Heart right ventricle (tissue), 16 donors: ENCODE measurements at regions of chr1 and their contacts with region 1.

Region 1: GRCh38 chr1:181514298-181515290 is 31.3 kb downstream of the CACNA1E start:
- DNase-seq: no peak
- ATAC-seq: peak in 3 of 8 donors; percentile 44 to 77 (median 55)
- H3K4me3 ChIP-seq: no peak overlapping the region
- H3K27ac ChIP-seq: no peak overlapping the region
- H3K4me1 ChIP-seq: no peaks in the 10 kb centered on the region
- H3K27me3 ChIP-seq: peaks cover 0 to 49% (median 28%) of the 10 kb centered on the region in 7 donors
- CTCF ChIP-seq: no peak

Region 2: DNA sequence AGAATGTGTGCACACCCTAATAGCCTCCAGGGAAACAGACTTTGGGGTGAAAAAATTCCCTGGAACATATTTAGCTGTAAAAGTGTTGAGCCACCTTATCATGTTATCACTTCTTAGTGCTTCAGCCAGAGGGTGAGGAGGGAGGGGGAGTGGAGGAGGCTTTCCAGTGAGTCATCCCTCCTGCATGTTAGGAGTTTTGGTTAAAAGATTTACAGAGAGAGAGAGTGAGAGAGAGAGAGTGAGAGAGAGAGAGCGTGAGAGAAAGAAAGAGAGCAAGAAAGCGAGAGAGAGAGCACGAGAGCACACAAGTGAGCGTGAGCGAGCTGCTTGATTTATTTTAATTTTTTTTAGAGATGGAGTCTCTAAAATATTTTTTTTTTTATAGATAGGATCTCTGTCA is 44.8 kb before region 1 on chr1:
- intact Hi-C with region 1: no loop called
- DNase-seq: no peak
- ATAC-seq: peak in 3 of 8 donors; percentile 20 to 55 (median 55)
- H3K4me3 ChIP-seq: no peak overlapping the region
- H3K27ac ChIP-seq: no peak overlapping the region
- H3K4me1 ChIP-seq: peaks cover 0 to 6% (median 0%) of the 10 kb centered on the region in 9 donors
- H3K27me3 ChIP-seq: peaks cover 0 to 86% (median 48%) of the 10 kb centered on the region in 7 donors
- CTCF ChIP-seq: no peak

Region 3: DNA sequence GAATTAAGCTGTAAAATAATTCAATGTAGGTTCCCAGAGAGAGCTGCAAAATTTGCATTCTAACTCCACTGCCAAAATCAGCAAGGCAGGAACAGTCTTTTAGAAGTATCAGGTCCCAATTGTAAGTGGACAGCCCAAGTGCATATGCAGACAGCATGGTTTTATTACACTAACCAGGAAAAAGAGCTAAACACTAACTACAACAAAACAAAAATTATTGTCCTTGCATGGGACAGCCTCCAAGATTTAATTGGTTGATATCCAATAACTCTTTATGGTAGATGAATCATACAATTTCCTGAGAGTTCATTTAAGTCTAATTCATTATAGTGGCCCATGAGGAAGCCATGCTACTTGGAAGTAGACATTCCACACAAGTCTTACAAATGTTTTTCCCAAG is 701.2 kb after region 1 on chr1:
- intact Hi-C with region 1: loop called in 1 of 10 experiments (anchors 10 kb)
- DNase-seq: no peak
- ATAC-seq: peak in 4 of 8 donors; percentile 16 to 66 (median 56)
- H3K4me3 ChIP-seq: no peak overlapping the region
- H3K27ac ChIP-seq: peak overlapping the region in 1 of 10 donors; percentile 3
- H3K4me1 ChIP-seq: peaks cover 0 to 17% (median 0%) of the 10 kb centered on the region in 9 donors
- H3K27me3 ChIP-seq: peaks cover 0 to 5% (median 0%) of the 10 kb centered on the region in 7 donors
- CTCF ChIP-seq: no peak